MCF 10A (cell line): ENCODE measurements at regions of chr14 and their contacts with region 1.

Region 1: DNA sequence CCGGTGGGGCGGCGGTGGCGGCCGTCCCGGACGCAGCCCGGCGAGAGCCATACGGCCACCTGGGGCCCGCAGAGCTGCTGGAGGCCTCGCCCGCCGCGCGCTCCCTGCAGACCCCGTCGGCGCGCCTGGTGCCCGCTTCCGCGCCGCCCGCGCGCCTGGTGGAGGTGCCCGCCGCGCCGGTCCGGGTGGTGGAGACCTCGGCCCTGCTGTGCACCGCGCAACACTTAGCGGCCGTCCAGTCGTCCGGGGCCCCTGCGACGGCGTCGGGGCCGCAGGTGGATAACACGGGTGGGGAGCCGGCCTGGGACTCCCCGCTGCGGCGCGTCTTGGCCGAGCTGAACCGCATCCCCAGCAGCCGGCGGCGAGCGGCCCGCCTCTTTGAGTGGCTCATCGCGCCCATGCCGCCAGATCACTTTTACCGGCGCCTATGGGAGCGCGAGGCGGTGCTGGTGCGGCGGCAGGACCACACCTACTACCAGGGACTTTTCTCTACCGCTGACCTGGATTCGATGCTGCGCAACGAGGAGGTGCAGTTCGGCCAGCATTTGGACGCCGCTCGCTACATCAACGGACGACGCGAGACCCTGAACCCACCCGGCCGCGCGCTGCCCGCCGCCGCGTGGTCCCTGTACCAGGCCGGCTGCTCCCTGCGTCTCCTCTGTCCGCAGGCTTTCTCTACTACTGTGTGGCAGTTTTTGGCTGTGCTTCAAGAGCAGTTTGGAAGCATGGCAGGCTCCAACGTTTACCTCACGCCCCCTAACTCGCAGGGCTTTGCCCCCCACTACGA is 716 bp downstream of the RIOX1 start:
- DNase-seq: peak; percentile 59
- H3K4me3 Mint-ChIP-seq: peak overlapping the region; percentile 86
- H3K27ac Mint-ChIP-seq: peak overlapping the region; percentile 83
- H3K4me1 Mint-ChIP-seq: peaks cover 12% of the 10 kb centered on the region
- H3K27me3 Mint-ChIP-seq: no peaks in the 10 kb centered on the region
- CTCF ChIP-seq: no peak

Region 2: GRCh38 chr14:73426877-73427276 is 64.6 kb before region 1 on chr14:
- CTCF ChIA-PET with region 1: no interaction called
- POLR2A ChIA-PET with region 1: no interaction called
- intact Hi-C with region 1: no loop called
- DNase-seq: no peak
- H3K4me3 Mint-ChIP-seq: no peak overlapping the region
- H3K27ac Mint-ChIP-seq: no peak overlapping the region
- H3K4me1 Mint-ChIP-seq: peaks cover 11% of the 10 kb centered on the region
- H3K27me3 Mint-ChIP-seq: no peaks in the 10 kb centered on the region
- CTCF ChIP-seq: no peak

Region 3: GRCh38 chr14:73438993-73439392 is 52.5 kb before region 1 on chr14:
- CTCF ChIA-PET with region 1: no interaction called
- POLR2A ChIA-PET with region 1: no interaction called
- intact Hi-C with region 1: no loop called
- DNase-seq: no peak
- H3K4me3 Mint-ChIP-seq: no peak overlapping the region
- H3K27ac Mint-ChIP-seq: no peak overlapping the region
- H3K4me1 Mint-ChIP-seq: no peaks in the 10 kb centered on the region
- H3K27me3 Mint-ChIP-seq: no peaks in the 10 kb centered on the region
- CTCF ChIP-seq: no peak

Region 4: DNA sequence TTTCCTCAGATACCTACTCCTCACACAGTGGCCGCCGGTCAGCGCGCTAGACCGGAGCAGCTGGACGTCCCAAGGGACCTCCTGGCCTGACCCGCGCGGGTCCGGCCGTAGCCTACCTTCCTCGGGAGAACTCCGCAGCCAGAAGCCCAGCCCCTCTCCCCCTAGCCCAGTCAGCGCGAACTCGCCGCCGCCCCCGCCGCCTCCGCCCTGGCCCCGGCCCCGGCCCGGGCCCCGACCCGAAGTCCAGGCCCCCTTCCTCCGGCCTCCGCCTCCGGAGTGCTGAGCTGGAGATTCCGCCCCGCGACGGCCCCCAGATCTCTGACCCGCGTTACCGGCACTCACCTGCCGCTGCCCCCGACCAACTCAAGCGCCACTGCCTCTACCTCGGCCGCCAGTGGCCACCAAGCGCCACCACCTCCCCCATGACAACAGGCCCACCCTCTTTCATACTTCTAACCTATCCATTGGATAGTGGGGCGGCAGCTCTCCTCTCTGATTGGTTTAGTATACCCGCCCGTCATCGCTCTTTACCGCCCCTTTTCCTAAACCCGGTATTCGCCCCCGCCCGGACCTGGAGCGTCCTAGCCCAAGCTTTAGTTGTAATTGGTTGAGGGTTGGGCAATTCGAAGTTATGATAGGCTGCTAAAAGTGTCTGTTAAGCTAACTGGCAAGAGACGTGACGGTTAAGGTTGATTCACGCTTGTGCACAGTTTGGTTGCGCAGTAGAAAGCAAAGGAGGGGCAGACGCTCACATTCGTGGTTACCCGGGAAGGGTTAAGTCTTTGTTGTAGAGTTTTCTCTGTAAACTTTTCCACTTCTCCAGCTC is 33.1 kb before region 1 on chr14 and contains the start of gene NUMB:
- CTCF ChIA-PET with region 1: interaction called, 3 read pairs
- POLR2A ChIA-PET with region 1: interaction called, 10 read pairs
- intact Hi-C with region 1: no loop called
- DNase-seq: peak; percentile 100
- H3K4me3 Mint-ChIP-seq: peak within 1 kb of the TSS; percentile 75
- H3K27ac Mint-ChIP-seq: peak within 1 kb of the TSS; percentile 98
- H3K4me1 Mint-ChIP-seq: peaks cover 33% of the 10 kb centered on the region
- H3K27me3 Mint-ChIP-seq: no peaks in the 10 kb centered on the region
- CTCF ChIP-seq: no peak
- total RNA-seq, gene NUMB: 81.5 and 88.5 TPM in 2 replicates

Region 5: GRCh38 chr14:73477618-73478266 is 13.7 kb before region 1 on chr14:
- CTCF ChIA-PET with region 1: no interaction called
- POLR2A ChIA-PET with region 1: interaction called, 11 read pairs
- intact Hi-C with region 1: no loop called
- DNase-seq: peak; percentile 63
- H3K4me3 Mint-ChIP-seq: no peak overlapping the region
- H3K27ac Mint-ChIP-seq: no peak overlapping the region
- H3K4me1 Mint-ChIP-seq: peaks cover 7% of the 10 kb centered on the region
- H3K27me3 Mint-ChIP-seq: no peaks in the 10 kb centered on the region
- CTCF ChIP-seq: no peak

Region 6: DNA sequence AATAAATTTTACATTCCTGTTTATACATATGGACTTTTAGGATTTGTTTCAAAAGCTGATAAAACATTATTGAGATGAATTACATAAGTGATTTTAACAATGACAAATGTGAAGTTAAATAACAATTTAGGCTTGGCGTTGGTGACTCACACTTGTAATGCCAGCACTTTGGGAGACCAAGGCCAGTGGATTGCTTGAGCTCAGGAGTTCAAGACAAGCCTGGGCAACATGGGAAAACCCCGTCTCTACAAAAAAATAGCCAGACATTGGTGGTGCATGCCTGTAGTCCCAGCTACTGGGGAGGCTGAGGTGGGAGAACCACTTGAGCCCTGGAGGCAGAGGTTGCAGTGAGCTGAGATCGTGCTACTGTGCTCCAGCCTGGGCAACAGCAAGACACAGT is 84.9 kb after region 1 on chr14:
- CTCF ChIA-PET with region 1: no interaction called
- POLR2A ChIA-PET with region 1: no interaction called
- intact Hi-C with region 1: no loop called
- DNase-seq: peak; percentile 86
- H3K4me3 Mint-ChIP-seq: no peak overlapping the region
- H3K27ac Mint-ChIP-seq: no peak overlapping the region
- H3K4me1 Mint-ChIP-seq: no peaks in the 10 kb centered on the region
- H3K27me3 Mint-ChIP-seq: no peaks in the 10 kb centered on the region
- CTCF ChIP-seq: no peak

Region 7: GRCh38 chr14:73949744-73950734 is 458.6 kb after region 1 on chr14 and contains the starts of genes COQ6 and FAM161B:
- CTCF ChIA-PET with region 1: no interaction called
- POLR2A ChIA-PET with region 1: no interaction called
- intact Hi-C with region 1: no loop called
- DNase-seq: peak; percentile 97
- H3K4me3 Mint-ChIP-seq: peak within 1 kb of the TSS; percentile 96
- H3K27ac Mint-ChIP-seq: peak within 1 kb of the TSS; percentile 93
- H3K4me1 Mint-ChIP-seq: peaks cover 10% of the 10 kb centered on the region
- H3K27me3 Mint-ChIP-seq: no peaks in the 10 kb centered on the region
- CTCF ChIP-seq: no peak
- total RNA-seq, gene COQ6: 25.0 and 25.5 TPM in 2 replicates
- total RNA-seq, gene FAM161B: 2.1 and 3.0 TPM in 2 replicates